Activated CD8-positive, alpha-beta memory T cell treated with anti-CD3 and anti-CD28 coated beads, Interleukin-2, amount 10 ng/mL, durations not matched to agents 7 days and 5 days (primary cell): ENCODE measurements at regions of chr2 and their contacts with region 1.

Region 1: GRCh38 chr2:176638167-176639015 is 369.1 kb downstream of the MTX2 start:
- DNase-seq: peak; percentile 70
- ATAC-seq: peak; percentile 92
- H3K4me3 Mint-ChIP-seq: peak overlapping the region; percentile 60
- H3K27ac Mint-ChIP-seq: no peak overlapping the region
- H3K4me1 Mint-ChIP-seq: peaks cover 11% of the 10 kb centered on the region
- H3K27me3 Mint-ChIP-seq: peaks cover 70% of the 10 kb centered on the region

Region 2: DNA sequence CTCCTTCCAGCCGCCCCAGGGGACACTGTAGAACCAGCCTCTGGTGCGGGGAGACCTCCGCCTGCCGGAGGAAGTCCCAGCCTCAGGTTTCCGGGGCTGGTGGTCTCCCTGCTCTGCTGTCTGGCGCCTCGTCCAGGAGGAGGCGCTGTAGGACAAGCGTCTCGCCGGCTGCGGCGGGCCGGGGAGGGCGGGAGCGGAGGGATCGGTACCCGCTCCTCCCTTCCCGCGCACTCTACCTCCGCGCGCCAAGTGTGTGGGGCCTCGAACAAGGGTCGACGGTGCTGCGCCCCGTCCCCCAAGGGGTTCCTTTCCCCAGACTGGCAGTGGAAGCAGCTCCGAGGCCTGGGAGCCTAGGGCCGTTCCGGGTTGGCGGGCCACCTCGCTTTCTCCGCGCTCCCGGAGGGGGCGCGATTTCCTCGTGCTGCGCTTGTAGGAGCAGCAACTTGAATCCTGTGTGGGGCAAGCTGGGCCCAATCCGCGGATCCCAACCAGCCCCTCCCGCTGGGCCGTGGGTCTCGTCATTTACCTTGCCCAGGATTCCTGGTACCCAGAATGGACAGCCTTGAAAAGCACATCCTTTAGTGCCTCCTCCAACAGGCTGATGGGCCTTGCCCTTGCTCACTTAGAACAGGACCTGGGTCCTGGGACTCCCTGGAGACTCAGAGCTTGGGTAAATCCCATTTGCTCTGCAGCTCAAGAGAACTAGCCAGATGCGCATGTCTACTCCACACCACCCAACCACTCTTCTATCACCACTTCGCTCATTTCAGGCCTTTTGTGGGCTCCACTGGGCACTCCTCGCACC is 497.7 kb before region 1 on chr2:
- CTCF ChIA-PET with region 1: interaction called, 18 read pairs
- DNase-seq: peak; percentile 80
- ATAC-seq: peak; percentile 94
- H3K4me3 Mint-ChIP-seq: peak overlapping the region; percentile 26
- H3K27ac Mint-ChIP-seq: no peak overlapping the region
- H3K4me1 Mint-ChIP-seq: peaks cover 13% of the 10 kb centered on the region
- H3K27me3 Mint-ChIP-seq: peaks cover 86% of the 10 kb centered on the region

Region 3: GRCh38 chr2:176454893-176455811 is 183.2 kb before region 1 on chr2:
- CTCF ChIA-PET with region 1: interaction called, 14 read pairs
- DNase-seq: peak; percentile 83
- ATAC-seq: peak; percentile 72
- H3K4me3 Mint-ChIP-seq: no peak overlapping the region
- H3K27ac Mint-ChIP-seq: no peak overlapping the region
- H3K4me1 Mint-ChIP-seq: peaks cover 1% of the 10 kb centered on the region
- H3K27me3 Mint-ChIP-seq: peaks cover 40% of the 10 kb centered on the region

Region 4: GRCh38 chr2:176814306-176815052 is 176.1 kb after region 1 on chr2:
- CTCF ChIA-PET with region 1: interaction called, 12 read pairs
- DNase-seq: no peak
- ATAC-seq: peak; percentile 65
- H3K4me3 Mint-ChIP-seq: peak overlapping the region; percentile 21
- H3K27ac Mint-ChIP-seq: no peak overlapping the region
- H3K4me1 Mint-ChIP-seq: peaks cover 35% of the 10 kb centered on the region
- H3K27me3 Mint-ChIP-seq: no peaks in the 10 kb centered on the region

Region 5: DNA sequence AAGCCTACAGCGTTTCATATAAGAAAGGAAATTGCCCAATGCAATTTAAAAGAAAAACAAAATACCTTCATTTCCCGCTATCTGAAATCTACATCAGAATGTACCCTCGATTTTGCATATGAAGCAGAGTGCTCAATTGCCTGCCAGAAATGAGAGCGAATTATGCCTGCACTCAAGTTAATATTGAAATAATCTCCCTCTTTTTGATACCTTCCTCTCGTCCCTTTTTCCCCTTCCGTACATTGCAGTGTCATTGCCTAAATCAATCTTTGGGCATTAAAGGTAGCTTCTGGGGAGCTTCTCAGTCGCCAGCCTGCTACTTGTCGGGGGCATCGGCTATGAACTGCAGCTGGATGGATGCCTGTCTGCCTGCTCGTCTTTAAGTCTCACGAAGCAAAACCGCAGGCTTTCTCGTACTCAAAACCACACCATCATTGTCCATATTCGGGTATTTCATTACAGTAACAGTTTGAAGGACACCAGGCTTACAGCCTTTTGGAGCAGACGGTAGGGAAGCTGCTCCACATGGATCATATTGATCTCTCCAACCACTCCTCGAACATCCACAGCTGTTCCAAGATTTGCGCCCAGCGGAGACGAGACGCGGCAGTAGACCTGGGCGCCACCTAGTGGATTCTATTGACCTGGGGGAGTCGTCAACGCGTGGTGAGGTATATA is 510.2 kb after region 1 on chr2:
- CTCF ChIA-PET with region 1: interaction called, 10 read pairs
- DNase-seq: peak; percentile 86
- ATAC-seq: peak; percentile 97
- H3K4me3 Mint-ChIP-seq: peak overlapping the region; percentile 88
- H3K27ac Mint-ChIP-seq: peak overlapping the region; percentile 67
- H3K4me1 Mint-ChIP-seq: peaks cover 25% of the 10 kb centered on the region
- H3K27me3 Mint-ChIP-seq: peaks cover 61% of the 10 kb centered on the region